ENCODE measurements at regions of chr16 and their contacts with region 1.

Region 1: DNA sequence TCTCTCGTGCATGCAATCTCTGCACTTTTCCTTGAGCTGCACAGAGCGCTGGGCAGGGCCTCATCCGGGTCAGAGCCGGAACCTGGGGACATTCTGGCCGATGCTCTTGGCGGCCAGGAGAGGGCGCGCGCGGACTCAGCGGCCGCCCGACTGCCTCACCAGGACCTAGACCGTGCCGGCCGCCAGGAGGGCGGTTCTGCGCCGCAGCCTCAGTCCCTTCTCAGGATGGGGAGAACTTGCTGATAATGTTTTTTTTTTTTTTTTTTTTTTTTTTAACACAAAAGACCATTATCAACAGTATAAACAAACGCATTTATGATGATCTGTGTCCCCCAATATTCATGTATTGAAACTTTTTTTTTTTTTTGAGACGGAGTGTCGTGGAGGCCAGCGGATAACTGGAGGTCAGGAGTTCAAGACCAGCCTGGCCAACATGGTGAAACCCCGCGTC is 8.1 kb upstream of the FLYWCH2 start:
- DNase-seq: peak; percentile 60
- H3K4me3 Mint-ChIP-seq: no peak overlapping the region
- H3K27ac Mint-ChIP-seq: no peak overlapping the region
- H3K4me1 Mint-ChIP-seq: no peaks in the 10 kb centered on the region
- H3K27me3 Mint-ChIP-seq: peaks cover 9% of the 10 kb centered on the region

Region 2: GRCh38 chr16:2854700-2855309 is 20.1 kb before region 1 on chr16:
- intact Hi-C with region 1: no loop called
- DNase-seq: no peak
- H3K4me3 Mint-ChIP-seq: no peak overlapping the region
- H3K27ac Mint-ChIP-seq: no peak overlapping the region
- H3K4me1 Mint-ChIP-seq: no peaks in the 10 kb centered on the region
- H3K27me3 Mint-ChIP-seq: peaks cover 6% of the 10 kb centered on the region

Region 3: GRCh38 chr16:2919511-2920255 is 44.7 kb after region 1 on chr16:
- intact Hi-C with region 1: loop called (anchors 1 kb)
- DNase-seq: peak; percentile 43
- H3K4me3 Mint-ChIP-seq: no peak overlapping the region
- H3K27ac Mint-ChIP-seq: no peak overlapping the region
- H3K4me1 Mint-ChIP-seq: peaks cover 12% of the 10 kb centered on the region
- H3K27me3 Mint-ChIP-seq: no peaks in the 10 kb centered on the region

Region 4: GRCh38 chr16:2926650-2927646 is 52.0 kb after region 1 on chr16:
- intact Hi-C with region 1: loop called (anchors 2 kb)
- DNase-seq: peak; percentile 83
- H3K4me3 Mint-ChIP-seq: no peak overlapping the region
- H3K27ac Mint-ChIP-seq: no peak overlapping the region
- H3K4me1 Mint-ChIP-seq: peaks cover 23% of the 10 kb centered on the region
- H3K27me3 Mint-ChIP-seq: no peaks in the 10 kb centered on the region

Region 5: GRCh38 chr16:3264137-3265036 is 389.4 kb after region 1 on chr16:
- intact Hi-C with region 1: no loop called
- DNase-seq: peak; percentile 95
- H3K4me3 Mint-ChIP-seq: peak overlapping the region; percentile 89
- H3K27ac Mint-ChIP-seq: peak overlapping the region; percentile 92
- H3K4me1 Mint-ChIP-seq: peaks cover 20% of the 10 kb centered on the region
- H3K27me3 Mint-ChIP-seq: no peaks in the 10 kb centered on the region